ENCODE measurements at regions of chr2 and their contacts with region 1.

Region 1: DNA sequence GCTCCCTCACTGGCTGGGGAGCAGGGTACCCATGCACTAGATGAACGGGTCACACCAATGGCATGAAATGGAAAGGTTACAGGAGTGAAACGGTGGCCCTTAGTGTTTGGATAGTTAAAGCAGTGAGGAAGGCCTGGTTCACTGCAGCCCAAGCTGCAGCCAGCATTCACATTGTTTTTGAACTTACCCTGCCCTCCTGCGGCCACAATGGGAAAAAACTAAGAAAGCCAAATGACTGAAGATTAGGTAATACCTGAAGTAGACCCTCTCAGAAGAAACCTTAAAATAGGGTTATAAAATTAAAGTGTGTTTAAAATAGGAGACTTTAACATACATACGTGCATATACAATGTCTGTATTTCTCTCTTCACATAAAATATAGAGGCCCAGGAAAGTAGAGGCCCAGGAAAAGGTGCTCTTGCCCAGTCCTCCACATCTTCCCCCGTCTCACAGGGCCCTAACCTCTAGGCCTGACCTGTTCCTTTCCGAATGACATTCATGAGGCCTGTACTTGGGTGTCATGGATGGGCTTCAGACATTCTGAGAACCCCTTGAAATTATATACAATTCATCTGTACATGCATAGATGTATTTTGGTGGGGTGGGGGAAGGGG is 33.3 kb downstream of the DOK1 start:
- ATAC-seq: peak; percentile 81 to 96 (median 92)
- H3K4me3 ChIP-seq: no peak overlapping the region
- H3K27ac ChIP-seq: no peak overlapping the region
- H3K4me1 ChIP-seq: no peaks in the 10 kb centered on the region

Region 2: GRCh38 chr2:74238879-74239278 is 348.9 kb before region 1 on chr2:
- in situ Hi-C with region 1: loop called in 1 of 9 experiments (anchors 25 kb)
- ATAC-seq: no peak
- H3K4me3 ChIP-seq: no peak overlapping the region
- H3K27ac ChIP-seq: no peak overlapping the region
- H3K4me1 ChIP-seq: no peaks in the 10 kb centered on the region

Region 3: GRCh38 chr2:74250189-74250631 is 337.6 kb before region 1 on chr2:
- in situ Hi-C with region 1: loop called in 2 of 9 experiments (anchors 25 kb)
- ATAC-seq: peak; percentile 53 to 84 (median 70)
- H3K4me3 ChIP-seq: no peak overlapping the region
- H3K27ac ChIP-seq: no peak overlapping the region
- H3K4me1 ChIP-seq: no peaks in the 10 kb centered on the region

Region 4: GRCh38 chr2:74482801-74483674 is 104.7 kb before region 1 on chr2 and contains the starts of genes CCDC142 and TTC31:
- in situ Hi-C with region 1: loop called in 3 of 9 experiments (anchors 25 kb)
- ATAC-seq: peak; percentile 92 to 94 (median 92)
- H3K4me3 ChIP-seq: peak within 1 kb of the TSS; percentile 79 to 97 (median 90)
- H3K27ac ChIP-seq: peak within 1 kb of the TSS; percentile 91 to 93
- H3K4me1 ChIP-seq: peaks cover 8 to 16% of the 10 kb centered on the region in 2 donors
- total RNA-seq, gene CCDC142: 8.0 to 32.3 (median 12.8) TPM
- total RNA-seq, gene TTC31: 4.0 to 23.5 (median 10.2) TPM

Measured in motor neuron (in vitro differentiated cells).